OCI-LY7 (cell line): ENCODE measurements at regions of chr20 and their contacts with region 1.

Region 1: DNA sequence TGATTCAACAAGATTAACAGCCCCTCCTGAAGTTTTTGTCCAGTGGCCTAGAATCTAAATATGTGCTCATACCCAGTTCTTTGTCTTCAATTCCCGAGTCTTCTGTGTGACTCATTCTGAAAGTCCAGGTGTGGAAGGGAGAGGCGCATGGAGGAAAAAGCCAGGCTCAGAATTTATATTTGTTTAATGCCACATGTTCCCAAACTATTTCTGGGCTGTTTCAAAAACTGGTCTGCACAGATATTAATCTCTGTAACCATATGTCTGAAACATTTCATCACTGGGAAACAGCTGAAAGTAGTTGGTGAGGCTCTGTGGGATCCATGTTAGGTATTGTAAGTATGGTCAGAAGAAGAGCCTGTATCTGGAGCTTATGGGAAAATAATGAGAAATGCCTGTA is 266.0 kb downstream of the PAX1 start:
- DNase-seq: no peak
- H3K4me3 ChIP-seq: no peak overlapping the region
- H3K27ac ChIP-seq: no peak overlapping the region
- H3K4me1 ChIP-seq: no peaks in the 10 kb centered on the region
- CTCF ChIP-seq: no peak

Region 2: DNA sequence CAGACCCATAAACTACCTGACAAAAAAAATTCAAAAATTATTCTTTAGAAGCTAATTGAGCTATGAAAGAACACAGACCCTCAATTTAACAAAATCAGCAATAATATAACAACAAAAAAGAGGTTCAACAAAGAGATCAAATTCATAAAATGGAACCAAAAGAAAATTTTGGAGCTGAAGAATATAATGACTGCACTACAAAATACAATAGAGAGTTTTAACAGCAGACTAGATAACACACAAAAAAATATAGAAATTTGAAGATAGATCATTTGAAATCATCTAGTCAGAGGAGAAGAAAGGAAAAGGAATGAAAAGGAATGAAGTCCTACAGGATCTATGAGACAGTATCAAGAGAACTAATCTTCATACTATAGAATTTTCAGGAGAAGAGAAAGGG is 156.2 kb after region 1 on chr20:
- CTCF ChIA-PET with region 1: no interaction called
- POLR2A ChIA-PET with region 1: no interaction called
- intact Hi-C with region 1: loop called (anchors 10 kb)
- DNase-seq: no peak
- H3K4me3 ChIP-seq: no peak overlapping the region
- H3K27ac ChIP-seq: no peak overlapping the region
- H3K4me1 ChIP-seq: no peaks in the 10 kb centered on the region
- CTCF ChIP-seq: no peak

Region 3: GRCh38 chr20:22523499-22524392 is 552.3 kb after region 1 on chr20:
- CTCF ChIA-PET with region 1: no interaction called
- POLR2A ChIA-PET with region 1: no interaction called
- intact Hi-C with region 1: no loop called
- DNase-seq: no peak
- H3K4me3 ChIP-seq: no peak overlapping the region
- H3K27ac ChIP-seq: no peak overlapping the region
- H3K4me1 ChIP-seq: no peaks in the 10 kb centered on the region
- CTCF ChIP-seq: no peak